Tibial artery (tissue), 4 donors: ENCODE measurements at regions of chr2 and their contacts with region 1.

Region 1: GRCh38 chr2:60707750-60708371 is 48.2 kb upstream of the PAPOLG start:
- DNase-seq: no peak
- H3K4me3 ChIP-seq: no peak overlapping the region
- H3K27ac ChIP-seq: no peak overlapping the region
- H3K4me1 ChIP-seq: peaks cover 0 to 3% (median 0%) of the 10 kb centered on the region in 4 donors
- H3K27me3 ChIP-seq: no peaks in the 10 kb centered on the region
- CTCF ChIP-seq: peak; percentile 74 to 75

Region 2: DNA sequence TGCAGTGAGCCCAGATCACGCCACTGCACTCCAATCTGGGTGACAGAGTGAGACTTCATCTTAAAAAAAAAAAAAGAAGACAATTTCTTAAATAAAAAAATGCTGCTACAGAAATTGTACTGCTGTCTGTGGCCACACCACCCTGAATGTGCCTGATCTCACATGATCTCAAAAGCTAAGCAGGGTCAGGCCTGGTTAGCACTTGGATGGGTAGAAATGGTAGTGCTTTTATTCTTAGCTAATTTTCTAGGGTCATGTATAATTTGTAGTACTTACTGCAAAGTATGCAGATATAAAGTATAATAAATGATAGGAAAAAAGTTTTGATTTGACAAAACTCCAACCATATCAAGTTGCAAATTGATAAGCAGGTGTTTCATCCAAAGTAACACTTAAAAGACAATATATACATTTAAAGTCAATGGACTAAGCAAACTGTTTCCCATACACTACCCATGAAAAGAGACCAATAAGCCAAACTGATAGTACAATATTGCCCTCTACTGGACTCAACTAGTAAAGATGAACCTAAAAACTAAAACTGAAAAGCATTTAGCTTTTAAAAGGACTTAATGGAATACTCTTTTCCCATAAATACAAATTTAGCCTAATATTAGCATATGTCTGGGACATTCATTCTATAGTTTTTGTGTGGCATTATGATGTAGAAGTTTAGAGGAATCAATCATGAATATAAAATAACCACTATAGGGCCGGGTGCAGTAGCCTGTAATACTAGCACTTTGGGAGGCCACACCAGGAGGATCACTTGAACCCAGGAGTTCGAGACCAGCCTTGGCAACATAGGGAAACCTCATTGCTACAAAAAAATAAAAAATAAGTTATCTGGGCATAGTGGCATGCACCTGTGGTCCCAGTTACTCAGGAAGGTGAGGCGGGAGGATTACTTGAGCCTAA is 291.0 kb after region 1 on chr2:
- intact Hi-C with region 1: loop called (anchors 2 kb)
- DNase-seq: no peak
- H3K4me3 ChIP-seq: no peak overlapping the region
- H3K27ac ChIP-seq: no peak overlapping the region
- H3K4me1 ChIP-seq: no peaks in the 10 kb centered on the region
- H3K27me3 ChIP-seq: no peaks in the 10 kb centered on the region
- CTCF ChIP-seq: peak; percentile 61 to 62